ENCODE measurements at regions of chr1 and their contacts with region 1.

Region 1: GRCh38 chr1:183471743-183472487 is 384 bp upstream of the SMG7 start:
- DNase-seq: peak; percentile 97 to 99 (median 99)
- ATAC-seq: peak; percentile 83 to 89 (median 86)
- H3K4me3 ChIP-seq: peak overlapping the region; percentile 69 to 98 (median 92)
- H3K27ac ChIP-seq: peak overlapping the region; percentile 91 to 99 (median 96)
- H3K4me1 ChIP-seq: peaks cover 3 to 44% (median 34%) of the 10 kb centered on the region in 12 donors
- H3K27me3 ChIP-seq: no peaks in the 10 kb centered on the region
- CTCF ChIP-seq: peak in 6 of 12 donors; percentile 6 to 44 (median 22)
- POLR2A ChIP-seq: peak in 1 of 2 donors; percentile 28

Region 2: DNA sequence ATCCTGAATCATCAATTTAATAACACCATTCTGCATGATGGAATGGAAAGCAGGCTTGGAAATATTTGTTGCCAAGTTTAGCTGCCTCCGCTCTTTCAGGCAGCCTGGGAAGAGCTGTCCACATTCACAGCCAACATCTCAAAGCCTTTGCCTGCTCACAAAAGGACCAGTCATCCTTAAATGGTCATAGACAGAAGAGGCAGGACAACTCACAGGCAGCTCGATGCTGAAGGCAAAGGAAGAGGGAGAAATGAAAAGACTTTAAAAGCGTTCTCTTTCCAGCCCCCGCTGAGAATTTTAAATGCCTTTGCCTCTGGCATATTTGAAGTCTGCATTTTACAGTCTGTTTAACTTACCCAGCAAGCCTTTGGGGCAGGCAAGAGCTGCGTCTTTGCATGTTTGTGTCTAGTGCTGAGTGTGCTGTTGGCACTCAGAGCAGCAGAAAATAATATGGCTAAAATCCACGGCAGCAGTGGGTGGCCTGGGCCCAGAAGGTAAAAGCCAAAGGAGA is 122.7 kb before region 1 on chr1:
- intact Hi-C with region 1: no loop called
- DNase-seq: peak in 4 of 5 donors; percentile 20 to 35 (median 28)
- ATAC-seq: peak; percentile 54 to 88 (median 84)
- H3K4me3 ChIP-seq: no peak overlapping the region
- H3K27ac ChIP-seq: peak overlapping the region in 5 of 12 donors; percentile 8 to 60 (median 39)
- H3K4me1 ChIP-seq: peaks cover 0 to 24% (median 11%) of the 10 kb centered on the region in 12 donors
- H3K27me3 ChIP-seq: no peaks in the 10 kb centered on the region
- CTCF ChIP-seq: no peak
- POLR2A ChIP-seq: no peak

Region 3: DNA sequence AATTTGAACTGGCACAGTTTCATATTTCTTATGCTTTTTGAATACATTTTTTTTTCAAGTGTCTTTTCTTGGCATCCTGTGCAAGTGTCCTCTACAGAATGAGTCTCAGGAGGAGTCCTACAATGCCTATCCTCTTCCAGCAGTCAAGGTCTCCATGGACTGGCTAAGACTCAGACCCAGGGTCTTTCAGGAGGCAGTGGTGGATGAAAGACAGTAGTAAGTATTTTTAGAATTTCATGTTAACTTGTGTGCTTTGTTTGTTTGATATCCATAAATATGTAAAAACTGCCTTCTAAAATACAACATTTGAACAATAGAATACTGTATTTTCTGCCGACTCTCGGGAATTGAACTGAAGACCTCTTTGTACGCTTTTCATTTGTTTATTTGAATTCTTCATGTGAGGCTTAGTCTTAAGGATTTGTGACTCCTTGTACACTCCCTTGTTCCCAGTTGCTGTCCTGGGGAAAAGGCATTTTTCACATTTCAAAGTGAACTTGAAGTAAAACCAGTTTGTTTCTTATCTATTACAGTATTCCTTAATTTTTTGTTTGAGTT is 61.8 kb after region 1 on chr1:
- intact Hi-C with region 1: no loop called
- DNase-seq: no peak
- ATAC-seq: no peak
- H3K4me3 ChIP-seq: no peak overlapping the region
- H3K27ac ChIP-seq: no peak overlapping the region
- H3K4me1 ChIP-seq: no peaks in the 10 kb centered on the region
- H3K27me3 ChIP-seq: no peaks in the 10 kb centered on the region
- CTCF ChIP-seq: no peak
- POLR2A ChIP-seq: no peak

Region 4: GRCh38 chr1:183543619-183544204 is 71.8 kb after region 1 on chr1:
- intact Hi-C with region 1: loop called (anchors 2 to 5 kb)
- DNase-seq: no peak
- ATAC-seq: peak; percentile 61 to 86 (median 78)
- H3K4me3 ChIP-seq: no peak overlapping the region
- H3K27ac ChIP-seq: peak overlapping the region in 3 of 12 donors; percentile 9 to 13 (median 10)
- H3K4me1 ChIP-seq: peaks cover 0 to 35% (median 10%) of the 10 kb centered on the region in 12 donors
- H3K27me3 ChIP-seq: no peaks in the 10 kb centered on the region
- CTCF ChIP-seq: peak; percentile 41 to 77 (median 60)
- POLR2A ChIP-seq: no peak

Region 5: DNA sequence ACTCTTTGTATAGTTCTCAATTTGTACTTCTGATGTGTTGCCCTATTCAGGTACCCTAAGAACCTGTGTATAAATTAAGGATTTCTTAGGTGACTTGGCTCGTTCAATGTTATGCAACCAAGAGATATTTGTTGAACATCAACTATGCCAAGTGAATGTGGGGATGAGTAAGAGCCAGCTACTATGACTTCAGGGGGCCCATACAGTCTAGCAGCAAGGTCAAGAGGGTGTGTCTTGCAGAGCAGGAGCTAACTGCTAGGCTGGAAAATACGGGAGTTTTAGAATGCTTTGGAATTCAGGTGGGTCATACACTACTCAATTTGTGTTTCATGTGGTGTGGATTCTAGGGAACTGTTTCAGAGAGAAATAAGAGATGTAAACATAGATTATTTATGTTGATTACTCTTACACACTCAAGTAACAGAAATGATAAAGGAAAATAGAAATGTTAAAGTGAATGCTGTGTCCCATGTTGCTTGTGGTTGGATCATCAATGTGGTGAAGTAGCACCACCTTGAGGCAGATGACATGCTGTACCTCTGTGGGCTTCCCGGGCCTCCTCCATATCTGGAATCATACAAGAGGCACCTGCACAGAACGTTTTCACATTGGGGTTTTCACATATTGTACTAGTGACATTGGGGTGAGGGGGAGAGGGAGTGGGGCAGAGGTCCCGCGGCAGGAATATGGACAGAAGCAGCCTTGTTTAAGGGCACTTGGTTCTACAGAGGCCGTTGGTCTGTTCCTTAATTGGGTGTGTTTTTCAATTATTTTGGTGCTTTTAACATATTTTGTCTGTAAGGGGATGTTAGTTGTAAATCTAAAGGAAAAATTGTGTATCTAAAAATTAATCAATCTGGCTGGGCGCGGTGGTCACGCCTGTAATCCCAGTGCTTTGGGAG is 151.2 kb after region 1 on chr1:
- intact Hi-C with region 1: loop called in 9 of 10 experiments (anchors 1 to 5 kb)
- DNase-seq: peak in 3 of 5 donors; percentile 38 to 53 (median 52)
- ATAC-seq: peak; percentile 83 to 94 (median 92)
- H3K4me3 ChIP-seq: no peak overlapping the region
- H3K27ac ChIP-seq: peak overlapping the region in 1 of 12 donors; percentile 27
- H3K4me1 ChIP-seq: peaks cover 0 to 51% (median 28%) of the 10 kb centered on the region in 12 donors
- H3K27me3 ChIP-seq: no peaks in the 10 kb centered on the region
- CTCF ChIP-seq: peak; percentile 45 to 79 (median 64)
- POLR2A ChIP-seq: no peak

Region 6: DNA sequence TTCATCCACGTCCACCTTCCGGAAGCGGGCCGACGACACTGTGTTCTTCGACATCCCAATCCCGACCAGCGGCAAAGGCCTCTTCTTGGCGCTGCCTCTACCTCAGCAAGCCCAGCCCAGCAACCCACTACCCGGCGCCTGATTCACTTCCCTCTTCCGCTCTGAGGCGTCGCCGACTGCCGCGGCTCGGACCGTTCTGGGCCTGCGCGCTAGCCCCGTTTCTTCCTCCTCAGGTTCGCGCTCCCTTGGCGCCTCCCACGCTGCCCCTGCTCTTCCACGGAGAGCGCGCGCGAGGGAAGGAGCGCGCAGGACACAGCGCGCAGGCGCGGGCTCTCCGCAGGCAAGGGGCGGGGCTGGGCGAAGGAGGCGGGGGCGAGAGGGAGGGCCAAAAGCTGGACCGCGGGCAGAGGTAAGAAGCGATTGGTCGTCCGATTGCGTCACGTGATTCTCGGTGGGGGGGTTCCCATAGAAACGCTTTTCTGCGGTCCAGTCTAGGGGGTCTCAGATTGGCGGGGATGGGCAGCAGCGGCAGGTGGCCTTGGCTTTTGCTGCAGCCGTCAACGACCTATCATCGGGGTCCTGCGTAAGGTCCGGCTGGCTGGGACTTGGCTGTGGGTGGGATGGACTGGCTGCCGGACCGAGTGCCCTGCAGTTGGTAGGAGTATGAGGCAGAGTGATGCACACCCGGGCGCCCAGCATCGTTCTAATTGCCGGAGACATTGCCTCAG is 163.9 kb after region 1 on chr1 and contains the start of gene ARPC5:
- intact Hi-C with region 1: loop called in 3 of 10 experiments (anchors 5 kb)
- DNase-seq: peak; percentile 97 to 99 (median 98)
- ATAC-seq: peak; percentile 95 to 97 (median 96)
- H3K4me3 ChIP-seq: peak within 1 kb of the TSS; percentile 66 to 97 (median 84)
- H3K27ac ChIP-seq: peak within 1 kb of the TSS; percentile 82 to 99 (median 94)
- H3K4me1 ChIP-seq: peaks cover 0 to 47% (median 34%) of the 10 kb centered on the region in 12 donors
- H3K27me3 ChIP-seq: no peaks in the 10 kb centered on the region
- CTCF ChIP-seq: no peak
- POLR2A ChIP-seq: peak; percentile 70 to 93
- total RNA-seq, gene ARPC5: 24.6 to 105 (median 31.3) TPM

Region 7: DNA sequence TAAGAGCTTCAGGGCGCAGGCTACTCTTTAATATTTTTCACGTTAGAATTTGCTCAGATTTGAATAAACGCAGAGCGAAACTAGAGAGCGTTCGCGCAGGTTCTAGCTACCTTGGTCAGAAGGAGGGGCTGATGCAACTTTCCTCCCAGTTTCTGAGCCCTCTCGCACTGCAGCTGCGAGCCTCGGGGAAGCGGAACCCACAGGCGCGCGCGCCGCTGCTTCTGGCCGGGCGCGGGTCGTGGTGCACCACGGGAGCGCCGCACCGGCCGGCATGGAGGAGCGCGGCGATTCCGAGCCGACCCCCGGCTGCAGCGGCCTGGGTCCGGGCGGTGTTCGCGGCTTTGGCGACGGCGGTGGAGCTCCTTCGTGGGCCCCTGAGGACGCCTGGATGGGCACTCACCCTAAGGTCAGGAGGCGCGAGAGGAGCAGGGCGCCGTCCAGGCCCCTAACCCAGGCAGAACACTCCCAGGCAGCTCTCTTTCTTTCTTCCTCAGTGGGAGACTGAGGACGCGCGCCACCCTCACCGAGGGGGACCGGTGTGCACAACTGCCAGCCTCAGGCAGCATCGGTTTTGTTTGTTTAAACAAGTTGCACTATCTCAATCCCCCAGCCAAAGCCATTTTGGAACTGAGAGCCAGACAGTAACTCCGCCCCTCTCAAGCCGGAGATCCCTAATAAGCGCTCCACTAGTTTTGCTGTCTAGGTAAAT is 579.7 kb after region 1 on chr1 and contains the start of gene TSEN15:
- intact Hi-C with region 1: loop called in 1 of 10 experiments (anchors 10 kb)
- DNase-seq: peak; percentile 75 to 91 (median 82)
- ATAC-seq: peak; percentile 95 to 99 (median 98)
- H3K4me3 ChIP-seq: peak within 1 kb of the TSS; percentile 75 to 96 (median 88)
- H3K27ac ChIP-seq: peak within 1 kb of the TSS; percentile 40 to 93 (median 88)
- H3K4me1 ChIP-seq: peaks cover 2 to 29% (median 22%) of the 10 kb centered on the region in 12 donors
- H3K27me3 ChIP-seq: no peaks in the 10 kb centered on the region
- CTCF ChIP-seq: peak in 1 of 12 donors; percentile 21
- POLR2A ChIP-seq: peak in 1 of 2 donors; percentile 58
- total RNA-seq, gene TSEN15: 23.5 to 32.3 (median 26.4) TPM

Measured in heart left ventricle (tissue), 16 donors.